ENCODE measurements at regions of chr1 and their contacts with region 1.

Region 1: GRCh38 chr1:241531195-241532161 is 700 bp upstream of the KMO start:
- DNase-seq: no peak
- H3K4me3 ChIP-seq: peak overlapping the region; percentile 55
- H3K27ac ChIP-seq: peak overlapping the region; percentile 14
- H3K27me3 ChIP-seq: peaks cover 2% of the 10 kb centered on the region
- CTCF ChIP-seq: peak; percentile 21

Region 2: GRCh38 chr1:241847796-241848685 is 316.6 kb after region 1 on chr1 and contains the start of gene EXO1:
- in situ Hi-C with region 1: loop called (anchors 25 kb)
- DNase-seq: peak; percentile 92
- H3K4me3 ChIP-seq: peak within 1 kb of the TSS; percentile 95
- H3K27ac ChIP-seq: peak within 1 kb of the TSS; percentile 100
- H3K27me3 ChIP-seq: no peaks in the 10 kb centered on the region
- CTCF ChIP-seq: peak; percentile 49

Measured in brain microvascular endothelial cell (primary cell).